Calu3 (cell line): ENCODE measurements at regions of chr1 and their contacts with region 1.

Region 1: DNA sequence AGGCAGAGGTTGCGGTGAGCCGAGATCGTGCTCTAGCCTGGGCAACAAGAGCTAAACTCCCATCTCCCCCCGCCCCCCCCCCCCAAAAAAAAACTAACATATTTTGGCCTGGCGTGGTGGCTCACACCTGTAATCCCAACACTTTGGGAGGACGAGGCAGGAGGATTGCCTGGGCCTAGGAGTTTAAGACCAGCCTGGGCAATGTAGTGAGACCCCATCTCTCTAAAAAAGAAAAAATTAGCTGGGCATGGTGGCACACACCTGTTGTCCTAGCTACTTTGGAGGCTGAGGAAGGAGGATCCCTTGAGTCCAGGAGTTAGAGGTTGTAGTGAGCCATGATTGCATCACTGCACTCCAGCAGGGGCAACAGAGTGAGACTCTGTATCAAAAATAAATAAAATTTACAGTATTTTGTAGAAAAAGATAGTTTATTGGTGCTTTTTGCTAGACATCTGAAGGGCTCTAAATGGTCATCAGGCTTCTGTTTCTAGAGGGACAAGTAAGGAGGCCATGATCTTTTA is 9.0 kb downstream of the YTHDF2 start:
- DNase-seq: no peak
- H3K4me3 Mint-ChIP-seq: no peak overlapping the region
- H3K27ac Mint-ChIP-seq: no peak overlapping the region
- H3K4me1 Mint-ChIP-seq: peaks cover 34% of the 10 kb centered on the region
- H3K27me3 Mint-ChIP-seq: no peaks in the 10 kb centered on the region
- CTCF ChIP-seq: no peak

Region 2: DNA sequence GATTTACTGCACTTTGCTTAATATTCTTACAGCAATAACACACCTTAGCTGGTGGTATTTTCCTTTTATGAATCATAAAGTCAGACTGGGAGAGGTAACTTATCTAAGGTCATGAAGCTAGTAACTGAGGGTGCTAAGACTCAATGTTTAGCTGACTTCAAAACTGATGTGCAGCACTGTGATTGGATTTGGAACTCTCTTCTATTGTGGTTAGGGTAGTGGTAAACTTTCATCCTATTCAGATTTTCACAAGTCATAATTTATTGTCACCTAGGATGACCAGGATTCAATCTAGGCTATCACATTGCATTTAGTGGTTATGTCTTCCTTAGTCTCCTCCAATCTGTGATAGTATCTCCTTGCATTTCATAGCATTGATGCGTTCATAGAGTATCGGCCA is 187.6 kb after region 1 on chr1:
- CTCF ChIA-PET with region 1: no interaction called
- intact Hi-C with region 1: loop called (anchors 5 kb)
- DNase-seq: no peak
- H3K4me3 Mint-ChIP-seq: no peak overlapping the region
- H3K27ac Mint-ChIP-seq: no peak overlapping the region
- H3K4me1 Mint-ChIP-seq: no peaks in the 10 kb centered on the region
- H3K27me3 Mint-ChIP-seq: no peaks in the 10 kb centered on the region
- CTCF ChIP-seq: no peak